ENCODE measurements at regions of chr7 and their contacts with region 1.

Region 1: GRCh38 chr7:151206914-151207313 is 3.4 kb downstream of the H2BK1 start:
- DNase-seq: peak in 3 of 5 donors; percentile 33 to 72 (median 41)
- H3K4me3 ChIP-seq: no peak overlapping the region
- H3K4me3 Mint-ChIP-seq: peak overlapping the region; percentile 13 to 77 (median 75)
- H3K27ac ChIP-seq: peak overlapping the region; percentile 14
- H3K27ac Mint-ChIP-seq: peak overlapping the region; percentile 86 to 100 (median 98)
- H3K4me1 ChIP-seq: peaks cover 29% of the 10 kb centered on the region
- H3K4me1 Mint-ChIP-seq: peaks cover 28 to 40% (median 39%) of the 10 kb centered on the region in 3 donors
- H3K27me3 ChIP-seq: peaks cover 2% of the 10 kb centered on the region
- H3K27me3 Mint-ChIP-seq: peaks cover 0 to 5% of the 10 kb centered on the region in 2 donors

Region 2: DNA sequence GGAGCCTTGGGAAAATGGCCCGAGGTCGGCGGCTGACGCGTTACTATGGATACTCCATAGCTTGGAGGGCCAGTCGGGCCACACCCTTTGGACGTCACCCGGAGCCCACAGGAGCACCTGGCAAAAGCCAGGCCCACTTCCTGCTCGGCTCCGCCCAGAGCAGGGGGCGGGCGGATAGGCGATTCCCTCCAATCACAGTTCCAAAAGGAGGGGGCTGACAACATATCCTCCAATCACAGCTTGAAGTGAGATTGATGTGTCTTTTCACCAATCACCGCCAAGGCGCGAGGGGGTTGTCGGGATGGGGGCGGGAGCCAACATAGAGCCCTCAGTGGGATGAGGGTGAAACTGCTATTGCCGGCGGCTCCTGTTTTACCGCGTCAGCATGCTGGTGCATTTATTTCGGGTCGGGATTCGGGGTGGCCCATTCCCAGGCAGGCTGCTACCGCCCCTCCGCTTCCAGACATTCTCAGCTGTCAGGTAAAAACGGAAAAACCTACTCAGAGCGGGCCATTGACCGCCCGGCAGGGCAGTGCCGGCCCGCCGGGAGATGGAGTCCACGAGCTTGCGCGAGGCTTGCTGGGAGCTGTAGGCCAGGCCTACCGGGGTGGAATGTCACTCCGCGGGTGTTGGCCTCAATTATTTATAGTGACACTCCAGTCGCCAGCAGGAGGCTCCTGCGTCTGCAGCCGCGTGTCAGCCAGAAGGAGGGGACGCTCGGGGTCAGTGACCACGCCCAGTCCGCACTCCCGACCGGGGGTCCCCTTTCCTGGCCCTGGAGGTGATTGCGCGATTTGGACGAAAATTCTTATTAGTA is 178.6 kb before region 1 on chr7 and contains the start of gene ABCB8:
- CTCF ChIA-PET with region 1: no interaction called
- POLR2A ChIA-PET with region 1: no interaction called
- DNase-seq: peak; percentile 93 to 99 (median 99)
- H3K4me3 ChIP-seq: peak within 1 kb of the TSS; percentile 100
- H3K4me3 Mint-ChIP-seq: peak within 1 kb of the TSS; percentile 87 to 98 (median 96)
- H3K27ac ChIP-seq: peak within 1 kb of the TSS; percentile 90
- H3K27ac Mint-ChIP-seq: peak within 1 kb of the TSS; percentile 98 to 100 (median 99)
- H3K4me1 ChIP-seq: peaks cover 20% of the 10 kb centered on the region
- H3K4me1 Mint-ChIP-seq: peaks cover 18 to 35% (median 28%) of the 10 kb centered on the region in 3 donors
- H3K27me3 ChIP-seq: no peaks in the 10 kb centered on the region
- H3K27me3 Mint-ChIP-seq: peaks cover 0 to 1% of the 10 kb centered on the region in 2 donors
- total RNA-seq, gene ABCB8: 49.2 to 52.3 TPM

Region 3: GRCh38 chr7:151226875-151227782 is 20.2 kb after region 1 on chr7 and contains the start of gene ABCF2:
- CTCF ChIA-PET with region 1: no interaction called
- POLR2A ChIA-PET with region 1: interaction called, 13 read pairs
- DNase-seq: peak; percentile 94 to 98 (median 97)
- H3K4me3 ChIP-seq: peak within 1 kb of the TSS; percentile 99
- H3K4me3 Mint-ChIP-seq: peak within 1 kb of the TSS; percentile 87 to 100 (median 99)
- H3K27ac ChIP-seq: peak within 1 kb of the TSS; percentile 77
- H3K27ac Mint-ChIP-seq: peak within 1 kb of the TSS; percentile 89 to 99 (median 98)
- H3K4me1 ChIP-seq: peaks cover 34% of the 10 kb centered on the region
- H3K4me1 Mint-ChIP-seq: peaks cover 42 to 53% (median 52%) of the 10 kb centered on the region in 3 donors
- H3K27me3 ChIP-seq: no peaks in the 10 kb centered on the region
- H3K27me3 Mint-ChIP-seq: no peaks in the 10 kb centered on the region
- total RNA-seq, gene ABCF2: 86.5 to 95.1 TPM